ENCODE measurements at regions of chr9 and their contacts with region 1.

Region 1: GRCh38 chr9:112203536-112203935 is 28.4 kb upstream of the SUSD1 start:
- DNase-seq: no peak
- ATAC-seq: no peak

Region 2: GRCh38 chr9:112268413-112268812 is 64.9 kb after region 1 on chr9:
- intact Hi-C with region 1: loop called (anchors 10 kb)
- DNase-seq: no peak
- ATAC-seq: no peak

Region 3: GRCh38 chr9:112582371-112583262 is 379.1 kb after region 1 on chr9:
- intact Hi-C with region 1: no loop called
- DNase-seq: no peak
- ATAC-seq: no peak

Measured in left ventricle myocardium superior (tissue), 1 donor.